Transverse colon (tissue), 4 donors: ENCODE measurements at regions of chr17 and their contacts with region 1.

Region 1: GRCh38 chr17:12887088-12887487 is 97.8 kb downstream of the ARHGAP44 start:
- DNase-seq: no peak
- H3K4me3 ChIP-seq: no peak overlapping the region
- H3K27ac ChIP-seq: no peak overlapping the region
- H3K4me1 ChIP-seq: peaks cover 0 to 10% (median 0%) of the 10 kb centered on the region in 4 donors
- H3K27me3 ChIP-seq: no peaks in the 10 kb centered on the region
- CTCF ChIP-seq: no peak
- EP300 ChIP-seq: no peak
- POLR2A ChIP-seq: no peak

Region 2: DNA sequence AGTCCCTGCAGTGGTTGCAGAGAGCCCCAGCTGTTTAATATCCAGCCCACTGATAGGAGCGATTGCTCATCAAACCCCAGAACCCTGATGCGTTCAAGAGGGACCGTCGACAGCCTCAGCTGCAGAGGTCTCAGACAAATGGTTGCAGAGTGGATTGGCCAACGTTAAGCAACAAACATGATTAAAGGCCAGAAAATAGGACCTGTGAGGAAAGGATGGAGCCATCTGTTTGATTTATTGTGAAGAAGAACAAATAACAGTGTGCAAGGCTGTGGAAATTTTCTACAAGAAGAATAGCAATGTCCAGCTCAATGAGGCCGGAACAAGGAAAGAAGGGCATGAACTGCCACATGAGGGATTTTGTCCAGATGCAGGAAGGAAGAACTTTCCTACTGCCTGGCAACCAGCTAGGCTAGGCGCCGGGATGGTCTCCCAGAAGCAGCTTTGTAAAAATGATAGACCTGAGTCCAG is 1427.2 kb before region 1 on chr17:
- in situ Hi-C with region 1: no loop called
- intact Hi-C with region 1: loop called (anchors 5 kb)
- DNase-seq: no peak
- H3K4me3 ChIP-seq: no peak overlapping the region
- H3K27ac ChIP-seq: no peak overlapping the region
- H3K4me1 ChIP-seq: no peaks in the 10 kb centered on the region
- H3K27me3 ChIP-seq: no peaks in the 10 kb centered on the region
- CTCF ChIP-seq: no peak
- EP300 ChIP-seq: no peak
- POLR2A ChIP-seq: no peak